ENCODE measurements at regions of chr12 and their contacts with region 1.

Region 1: GRCh38 chr12:120317224-120318105 is 10.1 kb downstream of the PLA2G1B start:
- DNase-seq: peak; percentile 99 to 100 (median 100)
- H3K4me3 ChIP-seq: peak overlapping the region; percentile 62 to 96 (median 79)
- H3K27ac ChIP-seq: peak overlapping the region; percentile 67 to 92
- H3K4me1 ChIP-seq: peaks cover 5 to 15% (median 10%) of the 10 kb centered on the region in 4 experiments
- H3K27me3 ChIP-seq: no peaks in the 10 kb centered on the region

Region 2: DNA sequence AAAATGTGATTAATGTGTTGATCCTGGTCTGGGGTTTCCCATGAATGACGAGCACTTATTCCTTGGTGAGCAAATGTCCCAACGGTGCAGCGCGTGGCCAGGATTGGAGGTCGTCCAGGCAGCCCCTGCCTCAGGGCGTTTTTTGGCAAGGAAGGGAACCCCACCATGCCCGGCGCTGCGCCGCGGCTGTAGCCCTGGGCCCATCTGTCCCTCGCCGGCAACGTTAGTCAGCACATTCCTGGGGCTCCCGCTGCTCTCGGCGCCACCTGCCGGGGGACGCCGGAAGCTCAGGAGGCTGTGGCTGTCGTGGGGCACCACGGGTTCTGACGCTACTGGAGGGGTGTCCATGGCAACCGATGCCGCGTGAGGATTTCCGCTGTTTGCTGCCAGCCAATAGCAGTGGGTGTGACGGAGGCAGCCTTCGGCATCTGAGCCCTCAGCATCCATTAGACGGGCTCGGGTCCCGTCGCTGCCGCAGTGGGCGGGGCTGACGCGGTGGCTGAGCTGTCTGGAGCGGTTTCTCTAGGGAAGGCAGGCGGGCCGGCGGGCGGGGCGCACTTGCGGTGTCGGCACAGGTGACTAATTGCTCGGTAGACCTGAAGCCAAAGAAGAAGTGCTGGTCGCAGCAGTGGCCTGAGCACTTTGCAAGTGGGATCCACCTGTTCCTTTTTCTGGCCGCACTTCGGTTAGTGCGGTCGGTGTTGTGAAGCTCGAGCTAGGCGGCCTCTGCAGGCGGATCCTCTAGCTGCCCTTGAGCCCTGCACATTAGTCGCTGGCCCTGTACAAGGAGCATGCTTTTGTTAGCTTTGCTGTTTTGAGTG is 230.5 kb before region 1 on chr12:
- CTCF ChIA-PET with region 1: no interaction called
- POLR2A ChIA-PET with region 1: no interaction called
- DNase-seq: peak; percentile 99 to 100 (median 100)
- H3K4me3 ChIP-seq: peak overlapping the region; percentile 19 to 76 (median 63)
- H3K27ac ChIP-seq: no peak overlapping the region
- H3K4me1 ChIP-seq: peaks cover 4 to 16% (median 10%) of the 10 kb centered on the region in 4 experiments
- H3K27me3 ChIP-seq: peaks cover 0 to 4% (median 0%) of the 10 kb centered on the region in 5 experiments

Region 3: DNA sequence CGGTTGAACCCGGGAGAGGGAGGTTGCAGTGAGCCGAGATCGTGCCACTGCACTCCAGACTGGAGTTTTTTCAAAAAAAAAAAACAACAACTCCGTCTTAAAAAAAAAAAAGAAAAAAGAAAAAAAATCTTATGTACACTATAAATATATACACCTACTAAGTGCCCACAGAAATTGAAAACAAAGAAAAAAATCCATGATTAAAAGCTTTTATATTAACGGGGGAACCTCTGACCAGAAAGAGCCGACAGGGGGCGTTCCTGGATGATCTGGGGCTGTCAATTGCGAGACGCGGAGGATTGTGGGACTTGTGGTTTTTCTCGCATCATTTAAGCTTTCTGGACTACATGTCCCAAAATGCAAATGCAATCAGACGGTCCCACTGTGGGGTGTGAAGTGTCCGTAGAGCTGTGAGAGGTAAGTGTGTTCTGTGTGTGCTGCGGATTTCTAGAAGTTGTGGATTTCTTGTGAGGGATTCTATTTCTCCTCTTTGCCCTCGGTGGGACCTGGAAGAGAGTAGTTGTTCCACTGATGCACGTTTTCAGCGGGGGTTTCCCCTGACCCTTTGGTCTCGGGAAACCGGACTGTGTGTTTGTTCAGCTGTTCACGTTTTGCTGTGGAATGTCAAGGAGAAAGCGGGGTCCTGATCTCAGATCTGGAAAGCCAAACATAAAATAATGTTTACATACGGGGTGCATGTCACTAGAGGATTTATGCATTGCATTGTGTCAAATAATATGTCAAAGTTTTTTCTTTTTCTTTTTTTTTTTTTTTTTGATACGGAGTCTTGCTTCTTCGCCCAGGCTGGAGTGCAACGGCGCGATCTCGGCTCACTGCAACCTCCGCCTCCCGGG is 15.3 kb before region 1 on chr12 and contains the start of gene SIRT4:
- CTCF ChIA-PET with region 1: interaction called, 46 read pairs
- POLR2A ChIA-PET with region 1: interaction called, 8 read pairs
- DNase-seq: peak; percentile 93 to 95 (median 94)
- H3K4me3 ChIP-seq: peak within 1 kb of the TSS; percentile 59 to 98 (median 86)
- H3K27ac ChIP-seq: peak within 1 kb of the TSS in 1 of 2 experiments; percentile 60
- H3K4me1 ChIP-seq: peaks cover 0 to 9% (median 4%) of the 10 kb centered on the region in 4 experiments
- H3K27me3 ChIP-seq: no peaks in the 10 kb centered on the region

Region 4: DNA sequence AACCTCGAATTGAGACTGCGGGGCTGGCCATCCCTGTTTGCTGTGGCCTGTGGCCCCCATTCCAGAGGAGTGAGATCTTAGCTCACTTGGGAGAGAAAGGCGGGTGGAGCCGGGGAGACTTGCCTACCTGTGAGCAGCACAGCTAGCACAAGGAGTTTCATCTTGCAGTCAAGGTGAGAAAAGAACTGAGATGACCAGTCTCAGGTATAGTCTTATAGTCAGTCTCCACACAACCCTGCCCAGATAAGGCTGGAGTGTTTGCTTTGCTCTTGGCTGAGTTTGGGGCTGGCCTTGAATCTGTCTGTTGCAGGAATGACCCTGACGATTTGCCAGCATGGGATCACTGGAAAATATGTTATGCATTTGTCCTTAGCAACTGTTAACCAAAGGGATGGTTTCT is 10.1 kb after region 1 on chr12 and contains the start of gene PLA2G1B:
- CTCF ChIA-PET with region 1: interaction called, 10 read pairs
- POLR2A ChIA-PET with region 1: no interaction called
- DNase-seq: no peak
- H3K4me3 ChIP-seq: no peak within 1 kb of the TSS
- H3K27ac ChIP-seq: no peak within 1 kb of the TSS
- H3K4me1 ChIP-seq: peaks cover 0 to 5% (median 4%) of the 10 kb centered on the region in 4 experiments
- H3K27me3 ChIP-seq: peaks cover 0 to 8% (median 0%) of the 10 kb centered on the region in 5 experiments

Measured in common myeloid progenitor, CD34-positive (primary cell).